Activated naive CD4-positive, alpha-beta T cell treated with anti-CD3 and anti-CD28 coated beads for 36 hours (primary cell): ENCODE measurements at regions of chr9 and their contacts with region 1.

Region 1: GRCh38 chr9:86354011-86354817 is at the start of gene TUT7:
- DNase-seq: peak; percentile 95
- H3K4me3 Mint-ChIP-seq: peak within 1 kb of the TSS; percentile 88
- H3K27ac Mint-ChIP-seq: peak within 1 kb of the TSS; percentile 95
- H3K4me1 Mint-ChIP-seq: peaks cover 30% of the 10 kb centered on the region
- H3K27me3 Mint-ChIP-seq: no peaks in the 10 kb centered on the region
- total RNA-seq, gene TUT7: 22.7 to 23.5 TPM

Region 2: GRCh38 chr9:85466834-85467233 is 887.4 kb before region 1 on chr9:
- CTCF ChIA-PET with region 1: no interaction called
- intact Hi-C with region 1: no loop called
- DNase-seq: no peak
- H3K4me3 Mint-ChIP-seq: no peak overlapping the region
- H3K27ac Mint-ChIP-seq: no peak overlapping the region
- H3K4me1 Mint-ChIP-seq: no peaks in the 10 kb centered on the region
- H3K27me3 Mint-ChIP-seq: no peaks in the 10 kb centered on the region

Region 3: DNA sequence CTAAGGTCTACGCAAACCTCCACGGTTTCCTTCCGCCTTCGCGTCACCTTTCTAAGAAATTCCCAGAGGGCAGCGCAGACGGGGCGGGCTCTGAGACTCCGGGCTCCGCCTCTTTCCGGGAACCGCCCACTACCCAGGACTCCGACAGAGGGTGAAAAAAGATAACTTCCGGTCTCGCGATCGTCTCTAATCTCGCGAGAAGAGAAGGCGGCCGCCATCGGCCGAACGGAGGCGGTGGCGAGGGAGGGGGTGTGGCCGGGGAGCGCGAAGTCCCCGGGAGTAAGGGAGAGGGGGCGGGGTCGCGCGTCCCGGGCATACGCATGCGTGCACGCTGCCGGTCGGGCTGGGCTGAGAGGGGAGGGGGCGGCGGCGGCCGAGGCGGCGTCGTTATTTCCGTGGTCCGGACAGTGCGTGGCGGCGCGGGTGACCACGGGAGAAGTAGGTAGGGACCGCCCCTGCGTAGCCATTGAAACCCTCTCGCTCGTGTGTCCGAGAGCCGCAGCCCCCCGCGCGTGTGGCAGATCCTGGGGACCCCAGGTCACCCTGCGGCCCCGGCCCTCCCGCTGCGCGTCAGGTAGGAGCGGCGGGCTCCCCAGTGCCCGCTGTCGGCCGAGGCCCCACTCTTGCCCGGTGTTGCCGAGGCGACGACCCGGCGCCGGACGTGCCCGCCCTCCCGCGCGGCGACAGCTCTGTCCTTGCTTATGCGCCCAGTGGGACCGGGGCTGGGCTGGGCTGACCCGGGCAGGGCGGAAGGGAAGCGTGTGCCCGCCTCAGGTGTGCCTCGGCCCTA is 413.2 kb before region 1 on chr9 and contains the start of gene NAA35:
- CTCF ChIA-PET with region 1: no interaction called
- intact Hi-C with region 1: loop called (anchors 1 kb)
- DNase-seq: peak; percentile 99
- H3K4me3 Mint-ChIP-seq: peak within 1 kb of the TSS; percentile 82
- H3K27ac Mint-ChIP-seq: peak within 1 kb of the TSS; percentile 89
- H3K4me1 Mint-ChIP-seq: peaks cover 17% of the 10 kb centered on the region
- H3K27me3 Mint-ChIP-seq: no peaks in the 10 kb centered on the region
- total RNA-seq, gene NAA35: 14.2 to 14.6 TPM

Region 4: GRCh38 chr9:86202338-86202882 is 151.8 kb before region 1 on chr9:
- CTCF ChIA-PET with region 1: no interaction called
- intact Hi-C with region 1: loop called (anchors 5 kb)
- DNase-seq: peak; percentile 23
- H3K4me3 Mint-ChIP-seq: no peak overlapping the region
- H3K27ac Mint-ChIP-seq: no peak overlapping the region
- H3K4me1 Mint-ChIP-seq: no peaks in the 10 kb centered on the region
- H3K27me3 Mint-ChIP-seq: peaks cover 3% of the 10 kb centered on the region

Region 5: DNA sequence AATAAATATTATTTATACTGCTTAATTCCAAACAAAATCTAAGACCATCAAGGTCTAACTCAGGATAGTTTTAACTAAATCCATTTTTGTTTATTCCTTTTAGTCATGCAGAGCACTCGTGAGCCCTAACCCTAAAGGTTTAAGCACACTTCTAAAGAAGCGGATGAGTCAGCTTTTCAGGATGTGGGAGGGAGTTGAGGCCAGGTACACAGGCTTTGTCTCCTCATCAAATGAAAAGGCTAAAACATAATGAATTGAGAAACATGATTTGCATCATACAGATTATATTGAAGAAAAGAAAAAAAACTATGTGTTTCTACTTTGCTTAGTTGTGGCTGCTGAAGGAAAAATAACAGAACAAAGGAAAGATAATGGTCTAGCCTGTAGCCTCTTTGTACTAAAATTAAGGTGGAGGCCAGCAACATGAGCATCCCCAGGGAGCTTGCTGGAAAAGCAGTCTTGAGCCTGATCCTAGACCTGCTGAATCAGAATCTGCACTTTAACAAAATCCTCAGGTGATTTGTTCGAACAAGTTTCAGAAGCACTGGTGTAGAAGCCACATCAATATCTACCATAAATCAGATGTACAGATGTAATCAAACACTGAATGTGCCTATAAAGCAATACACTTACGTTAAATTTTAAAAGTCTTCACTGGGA is 50.8 kb before region 1 on chr9:
- CTCF ChIA-PET with region 1: no interaction called
- intact Hi-C with region 1: loop called (anchors 1 kb)
- DNase-seq: peak; percentile 61
- H3K4me3 Mint-ChIP-seq: no peak overlapping the region
- H3K27ac Mint-ChIP-seq: peak overlapping the region; percentile 81
- H3K4me1 Mint-ChIP-seq: peaks cover 16% of the 10 kb centered on the region
- H3K27me3 Mint-ChIP-seq: no peaks in the 10 kb centered on the region

Region 6: DNA sequence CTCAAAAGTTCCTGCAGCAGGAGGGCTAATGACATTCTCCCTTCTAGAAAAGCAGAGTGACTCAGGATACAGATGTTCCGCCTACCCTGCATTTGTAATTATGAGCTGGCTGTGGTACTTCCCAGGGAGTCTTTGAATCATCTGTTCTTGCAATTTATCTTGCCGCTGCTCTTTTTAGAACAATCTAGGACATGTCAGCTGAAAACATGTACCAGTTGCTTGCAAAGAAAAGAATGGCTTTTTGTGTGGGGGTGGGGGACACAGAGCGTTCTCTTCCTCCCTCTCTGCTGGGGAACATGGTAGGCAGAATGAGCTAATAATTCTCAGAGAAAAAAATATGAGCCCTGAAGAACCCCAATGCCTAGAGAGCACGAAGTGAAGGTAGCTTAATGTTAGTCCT is 51.7 kb after region 1 on chr9:
- CTCF ChIA-PET with region 1: no interaction called
- intact Hi-C with region 1: loop called (anchors 2 kb)
- DNase-seq: peak; percentile 52
- H3K4me3 Mint-ChIP-seq: peak overlapping the region; percentile 10
- H3K27ac Mint-ChIP-seq: peak overlapping the region; percentile 55
- H3K4me1 Mint-ChIP-seq: peaks cover 27% of the 10 kb centered on the region
- H3K27me3 Mint-ChIP-seq: peaks cover 19% of the 10 kb centered on the region

Region 7: GRCh38 chr9:87535817-87536539 is 1181.8 kb after region 1 on chr9:
- CTCF ChIA-PET with region 1: no interaction called
- intact Hi-C with region 1: loop called (anchors 5 kb)
- DNase-seq: peak; percentile 53
- H3K4me3 Mint-ChIP-seq: no peak overlapping the region
- H3K27ac Mint-ChIP-seq: peak overlapping the region; percentile 71
- H3K4me1 Mint-ChIP-seq: peaks cover 10% of the 10 kb centered on the region
- H3K27me3 Mint-ChIP-seq: no peaks in the 10 kb centered on the region

Region 8: GRCh38 chr9:88303721-88304451 is 1949.7 kb after region 1 on chr9:
- CTCF ChIA-PET with region 1: no interaction called
- intact Hi-C with region 1: loop called (anchors 10 kb)
- DNase-seq: peak; percentile 75
- H3K4me3 Mint-ChIP-seq: no peak overlapping the region
- H3K27ac Mint-ChIP-seq: no peak overlapping the region
- H3K4me1 Mint-ChIP-seq: peaks cover 23% of the 10 kb centered on the region
- H3K27me3 Mint-ChIP-seq: peaks cover 8% of the 10 kb centered on the region